Activated B cell treated with CpG ODN at 0.5 μM for 24 hours (primary cell): ENCODE measurements at regions of chr22 and their contacts with region 1.

Region 1: DNA sequence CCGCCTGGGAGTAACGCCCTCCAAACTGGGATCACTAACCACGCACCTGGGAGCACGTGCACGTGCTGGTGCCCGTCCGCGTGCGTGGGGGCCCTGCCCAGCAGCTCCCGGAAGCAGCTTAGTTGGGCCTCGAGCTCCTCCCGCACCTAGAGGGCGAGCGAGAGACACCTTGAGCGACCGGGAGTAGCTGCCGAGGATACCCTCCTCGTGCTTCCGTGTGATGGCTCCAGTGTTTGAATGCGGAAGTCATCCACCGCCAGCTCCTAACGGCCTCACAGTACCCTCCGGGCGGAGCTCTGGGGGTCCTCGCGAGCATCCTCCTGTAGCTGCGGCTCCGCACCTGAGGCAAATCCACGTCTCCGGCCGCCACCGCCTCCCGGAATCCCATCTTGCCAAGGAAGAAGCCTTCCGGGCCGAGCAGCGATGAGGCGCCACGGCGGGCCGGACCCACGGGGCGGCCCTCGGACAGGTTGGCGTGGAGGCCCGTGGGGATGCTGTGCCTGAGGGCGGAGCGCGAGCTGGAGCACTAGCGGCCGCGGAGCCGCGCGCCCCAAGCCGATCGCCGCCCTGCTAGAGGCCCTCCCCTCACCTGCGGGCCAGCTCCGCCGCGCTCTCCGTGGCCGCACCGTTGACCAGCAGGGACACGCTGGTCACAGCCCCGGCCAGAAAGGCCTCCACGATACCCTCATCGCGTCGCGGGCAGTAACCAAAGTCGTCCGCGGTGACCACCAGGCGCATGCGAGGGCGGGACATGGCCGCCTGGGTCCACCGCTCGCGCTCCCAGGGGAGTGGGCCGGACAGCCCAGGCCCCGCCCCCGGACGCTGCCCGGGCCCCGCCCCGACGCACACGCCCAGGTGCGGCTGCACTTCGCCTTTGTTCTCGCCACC is at the start of gene YDJC:
- DNase-seq: peak; percentile 95
- ATAC-seq: peak; percentile 85
- H3K4me3 Mint-ChIP-seq: peak within 1 kb of the TSS; percentile 91
- H3K27ac Mint-ChIP-seq: peak within 1 kb of the TSS; percentile 92
- H3K4me1 Mint-ChIP-seq: peaks cover 48% of the 10 kb centered on the region
- H3K27me3 Mint-ChIP-seq: no peaks in the 10 kb centered on the region
- CTCF ChIP-seq: peak; percentile 31
- total RNA-seq, gene YDJC: 46.1 and 51.4 TPM in 2 replicates

Region 2: DNA sequence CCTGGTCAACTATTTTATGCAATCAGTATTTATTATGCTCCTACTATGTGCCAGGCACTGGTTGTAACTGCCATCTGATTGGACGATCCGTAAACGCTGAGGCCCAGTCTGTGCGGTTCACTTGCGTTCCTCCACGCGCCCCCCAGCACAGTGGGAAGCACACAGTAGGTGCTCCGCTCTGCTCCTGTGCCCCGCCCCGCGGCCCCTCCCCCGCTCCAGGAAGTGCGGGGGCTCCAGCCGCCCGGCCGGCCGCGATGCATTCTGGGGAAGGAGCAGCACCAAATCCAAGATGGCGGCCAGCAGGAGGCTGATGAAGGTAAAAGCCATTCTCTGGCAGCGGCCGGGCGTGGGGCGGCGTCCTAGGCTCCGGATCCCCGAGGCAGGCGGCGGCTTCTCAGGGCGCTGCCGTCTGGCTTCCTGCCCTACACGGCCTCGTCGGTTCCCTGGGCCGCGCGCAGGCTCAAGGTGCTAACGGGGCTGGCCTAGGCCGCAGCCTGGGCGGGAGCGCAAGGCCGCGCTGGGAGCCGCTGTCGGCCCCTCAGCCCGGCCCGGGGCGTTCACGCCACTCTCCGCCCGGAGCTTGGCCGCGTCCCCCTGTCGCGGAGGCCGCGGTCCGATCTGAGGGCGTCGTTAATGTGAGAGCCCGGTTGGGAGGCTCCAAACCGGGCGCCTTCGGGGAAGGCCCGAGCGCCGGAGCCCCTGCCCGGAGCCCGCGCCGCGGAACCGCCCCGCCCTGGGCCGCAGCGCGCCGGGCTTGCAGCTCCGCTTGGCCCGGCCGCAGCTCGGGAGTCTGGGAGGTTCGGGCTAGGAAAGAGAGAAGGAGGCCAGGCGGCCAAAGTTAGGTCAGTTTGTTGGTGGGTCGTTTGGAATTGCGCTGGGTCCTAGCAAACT is 61.8 kb before region 1 on chr22 and contains the start of gene UBE2L3:
- CTCF ChIA-PET with region 1: interaction called, 4 read pairs
- POLR2A ChIA-PET with region 1: interaction called, 10 read pairs
- intact Hi-C with region 1: loop called (anchors 10 kb)
- DNase-seq: peak; percentile 86
- ATAC-seq: peak; percentile 92
- H3K4me3 Mint-ChIP-seq: peak within 1 kb of the TSS; percentile 89
- H3K27ac Mint-ChIP-seq: peak within 1 kb of the TSS; percentile 82
- H3K4me1 Mint-ChIP-seq: peaks cover 44% of the 10 kb centered on the region
- H3K27me3 Mint-ChIP-seq: no peaks in the 10 kb centered on the region
- CTCF ChIP-seq: no peak
- total RNA-seq, gene UBE2L3: 39.8 and 43.3 TPM in 2 replicates

Region 3: DNA sequence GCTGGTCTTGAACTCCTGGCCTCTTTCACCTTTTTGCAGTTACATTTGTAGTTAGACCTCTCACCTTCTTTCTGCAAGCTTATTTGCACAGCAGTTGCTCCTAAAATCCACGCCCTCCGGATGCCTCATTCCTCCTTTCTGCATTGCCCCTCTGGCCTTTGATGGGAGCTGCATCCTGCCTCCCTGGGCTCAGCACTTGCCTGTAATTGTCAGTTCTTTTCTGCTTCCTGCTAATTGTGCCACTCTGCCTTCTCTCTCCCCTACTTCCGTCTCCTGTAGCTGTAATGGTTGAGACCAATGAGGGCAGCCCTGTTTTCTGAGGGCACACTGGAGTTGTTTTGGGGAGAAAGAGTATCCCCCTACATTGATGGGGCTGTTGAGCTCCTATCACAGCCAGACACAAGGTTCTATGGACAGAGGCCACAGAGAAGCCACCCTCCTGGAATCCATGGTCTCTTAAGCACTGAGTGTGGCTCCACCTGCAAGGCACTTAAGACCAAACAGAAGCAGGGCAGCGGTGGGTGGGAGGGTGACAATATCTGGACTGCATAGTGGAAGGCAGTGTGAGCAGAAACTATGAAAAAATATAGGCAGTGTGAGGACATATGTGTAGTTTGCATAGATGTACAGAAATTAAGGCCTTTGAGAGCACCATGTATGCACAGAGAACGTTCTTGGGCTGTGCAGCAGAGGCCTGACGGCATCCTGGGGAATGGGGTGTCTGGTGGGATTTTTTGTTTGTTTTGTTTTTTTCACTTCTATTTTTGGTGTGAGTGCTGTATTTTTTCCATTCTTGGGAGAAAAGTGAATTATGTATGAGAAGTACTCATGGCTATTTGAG is 30.2 kb before region 1 on chr22:
- CTCF ChIA-PET with region 1: no interaction called
- POLR2A ChIA-PET with region 1: no interaction called
- intact Hi-C with region 1: no loop called
- DNase-seq: no peak
- ATAC-seq: no peak
- H3K4me3 Mint-ChIP-seq: no peak overlapping the region
- H3K27ac Mint-ChIP-seq: no peak overlapping the region
- H3K4me1 Mint-ChIP-seq: peaks cover 26% of the 10 kb centered on the region
- H3K27me3 Mint-ChIP-seq: no peaks in the 10 kb centered on the region
- CTCF ChIP-seq: no peak

Region 4: GRCh38 chr22:21612865-21613265 is 16.6 kb before region 1 on chr22:
- CTCF ChIA-PET with region 1: interaction called, 11 read pairs
- POLR2A ChIA-PET with region 1: interaction called, 13 read pairs
- intact Hi-C with region 1: no loop called
- DNase-seq: no peak
- ATAC-seq: no peak
- H3K4me3 Mint-ChIP-seq: no peak overlapping the region
- H3K27ac Mint-ChIP-seq: peak overlapping the region; percentile 35
- H3K4me1 Mint-ChIP-seq: peaks cover 42% of the 10 kb centered on the region
- H3K27me3 Mint-ChIP-seq: no peaks in the 10 kb centered on the region
- CTCF ChIP-seq: no peak

Region 5: DNA sequence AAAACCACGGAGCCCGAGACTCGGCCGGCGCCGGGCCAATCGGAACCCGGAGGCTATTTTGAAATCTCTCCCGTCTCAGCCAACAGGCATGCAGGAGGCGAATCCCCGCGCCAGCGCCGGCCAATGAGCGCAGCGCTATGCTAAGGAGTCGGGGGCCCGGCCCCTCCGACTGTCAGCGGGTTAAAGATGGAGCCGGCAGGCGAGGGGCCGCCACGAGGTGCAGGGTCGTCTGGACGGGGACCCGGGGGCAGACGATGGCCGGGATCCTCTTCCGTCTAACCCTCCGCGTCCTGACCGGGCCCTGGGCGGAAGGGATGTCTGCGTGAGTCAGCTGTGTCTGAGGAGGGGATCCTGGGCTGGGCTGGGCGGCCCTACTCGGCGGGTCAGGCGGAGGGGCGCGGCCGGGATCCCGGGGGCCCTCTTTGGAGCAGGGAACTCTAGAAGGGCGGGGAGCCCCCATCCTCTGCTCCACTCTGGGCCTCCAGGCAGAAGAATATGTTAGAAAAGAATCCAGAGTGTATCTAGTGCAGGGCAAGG is 22.6 kb after region 1 on chr22:
- CTCF ChIA-PET with region 1: interaction called, 27 read pairs
- POLR2A ChIA-PET with region 1: interaction called, 10 read pairs
- intact Hi-C with region 1: no loop called
- DNase-seq: peak; percentile 77
- ATAC-seq: peak; percentile 98
- H3K4me3 Mint-ChIP-seq: peak overlapping the region; percentile 90
- H3K27ac Mint-ChIP-seq: no peak overlapping the region
- H3K4me1 Mint-ChIP-seq: peaks cover 21% of the 10 kb centered on the region
- H3K27me3 Mint-ChIP-seq: no peaks in the 10 kb centered on the region
- CTCF ChIP-seq: no peak

Region 6: GRCh38 chr22:21690401-21690801 is 60.9 kb after region 1 on chr22:
- CTCF ChIA-PET with region 1: no interaction called
- POLR2A ChIA-PET with region 1: no interaction called
- intact Hi-C with region 1: no loop called
- DNase-seq: no peak
- ATAC-seq: no peak
- H3K4me3 Mint-ChIP-seq: no peak overlapping the region
- H3K27ac Mint-ChIP-seq: peak overlapping the region; percentile 36
- H3K4me1 Mint-ChIP-seq: peaks cover 14% of the 10 kb centered on the region
- H3K27me3 Mint-ChIP-seq: no peaks in the 10 kb centered on the region
- CTCF ChIP-seq: no peak

Region 7: GRCh38 chr22:21791635-21792625 is 162.4 kb after region 1 on chr22:
- CTCF ChIA-PET with region 1: no interaction called
- POLR2A ChIA-PET with region 1: no interaction called
- intact Hi-C with region 1: no loop called
- DNase-seq: no peak
- ATAC-seq: peak; percentile 73
- H3K4me3 Mint-ChIP-seq: no peak overlapping the region
- H3K27ac Mint-ChIP-seq: peak overlapping the region; percentile 4
- H3K4me1 Mint-ChIP-seq: peaks cover 8% of the 10 kb centered on the region
- H3K27me3 Mint-ChIP-seq: no peaks in the 10 kb centered on the region
- CTCF ChIP-seq: no peak